Kidney (tissue), 22 donors: ENCODE measurements at regions of chr3 and their contacts with region 1.

Region 1: GRCh38 chr3:134308350-134308891 is 57.8 kb upstream of the RYK start:
- DNase-seq: peak; percentile 88 to 92 (median 89)
- H3K4me3 ChIP-seq: peak overlapping the region; percentile 35 to 47 (median 45)
- H3K27ac ChIP-seq: peak overlapping the region in 1 of 2 donors; percentile 2
- H3K4me1 ChIP-seq: peaks cover 2 to 45% (median 26%) of the 10 kb centered on the region in 3 donors
- H3K27me3 ChIP-seq: no peaks in the 10 kb centered on the region
- CTCF ChIP-seq: peak; percentile 99

Region 2: GRCh38 chr3:133649486-133650068 is 658.8 kb before region 1 on chr3:
- intact Hi-C with region 1: no loop called
- DNase-seq: no peak
- H3K4me3 ChIP-seq: no peak overlapping the region
- H3K27ac ChIP-seq: no peak overlapping the region
- H3K4me1 ChIP-seq: no peaks in the 10 kb centered on the region
- H3K27me3 ChIP-seq: no peaks in the 10 kb centered on the region
- CTCF ChIP-seq: no peak

Region 3: GRCh38 chr3:133663569-133664313 is 644.7 kb before region 1 on chr3:
- intact Hi-C with region 1: no loop called
- DNase-seq: peak in 4 of 5 donors; percentile 18 to 80 (median 62)
- H3K4me3 ChIP-seq: peak overlapping the region in 1 of 3 donors; percentile 8
- H3K27ac ChIP-seq: no peak overlapping the region
- H3K4me1 ChIP-seq: peaks cover 0 to 7% (median 4%) of the 10 kb centered on the region in 3 donors
- H3K27me3 ChIP-seq: no peaks in the 10 kb centered on the region
- CTCF ChIP-seq: peak; percentile 48

Region 4: GRCh38 chr3:134212906-134213665 is 95.3 kb before region 1 on chr3:
- intact Hi-C with region 1: loop called (anchors 10 kb)
- DNase-seq: peak; percentile 85 to 91 (median 88)
- H3K4me3 ChIP-seq: no peak overlapping the region
- H3K27ac ChIP-seq: no peak overlapping the region
- H3K4me1 ChIP-seq: no peaks in the 10 kb centered on the region
- H3K27me3 ChIP-seq: no peaks in the 10 kb centered on the region
- CTCF ChIP-seq: peak; percentile 90

Region 5: GRCh38 chr3:134364061-134364935 is 55.9 kb after region 1 on chr3:
- intact Hi-C with region 1: loop called (anchors 5 kb)
- DNase-seq: peak; percentile 97 to 99 (median 98)
- H3K4me3 ChIP-seq: peak overlapping the region in 2 of 3 donors; percentile 8 to 23
- H3K27ac ChIP-seq: peak overlapping the region; percentile 91 to 93
- H3K4me1 ChIP-seq: peaks cover 10 to 89% (median 89%) of the 10 kb centered on the region in 3 donors
- H3K27me3 ChIP-seq: no peaks in the 10 kb centered on the region
- CTCF ChIP-seq: no peak